Psoas muscle (tissue), 8 donors: ENCODE measurements at regions of chr9 and their contacts with region 1.

Region 1: GRCh38 chr9:121598965-121599871 is 52.2 kb upstream of the DAB2IP start:
- DNase-seq: peak; percentile 88 to 93
- ATAC-seq: peak; percentile 81 to 89 (median 86)
- H3K4me3 ChIP-seq: peak overlapping the region; percentile 86
- H3K27ac ChIP-seq: peak overlapping the region; percentile 98
- H3K4me1 ChIP-seq: peaks cover 39% of the 10 kb centered on the region
- H3K27me3 ChIP-seq: no peaks in the 10 kb centered on the region
- CTCF ChIP-seq: no peak

Region 2: GRCh38 chr9:121404906-121405305 is 194.3 kb before region 1 on chr9:
- intact Hi-C with region 1: no loop called
- DNase-seq: no peak
- ATAC-seq: no peak
- H3K4me3 ChIP-seq: no peak overlapping the region
- H3K27ac ChIP-seq: no peak overlapping the region
- H3K4me1 ChIP-seq: peaks cover 2% of the 10 kb centered on the region
- H3K27me3 ChIP-seq: no peaks in the 10 kb centered on the region
- CTCF ChIP-seq: no peak

Region 3: GRCh38 chr9:121557581-121558447 is 41.4 kb before region 1 on chr9:
- intact Hi-C with region 1: loop called (anchors 5 kb)
- DNase-seq: peak; percentile 79 to 87
- ATAC-seq: peak; percentile 82 to 87 (median 86)
- H3K4me3 ChIP-seq: peak overlapping the region; percentile 22
- H3K27ac ChIP-seq: peak overlapping the region; percentile 87
- H3K4me1 ChIP-seq: peaks cover 44% of the 10 kb centered on the region
- H3K27me3 ChIP-seq: no peaks in the 10 kb centered on the region
- CTCF ChIP-seq: no peak